GM23248 (cell line): ENCODE measurements at regions of chr10 and their contacts with region 1.

Region 1: DNA sequence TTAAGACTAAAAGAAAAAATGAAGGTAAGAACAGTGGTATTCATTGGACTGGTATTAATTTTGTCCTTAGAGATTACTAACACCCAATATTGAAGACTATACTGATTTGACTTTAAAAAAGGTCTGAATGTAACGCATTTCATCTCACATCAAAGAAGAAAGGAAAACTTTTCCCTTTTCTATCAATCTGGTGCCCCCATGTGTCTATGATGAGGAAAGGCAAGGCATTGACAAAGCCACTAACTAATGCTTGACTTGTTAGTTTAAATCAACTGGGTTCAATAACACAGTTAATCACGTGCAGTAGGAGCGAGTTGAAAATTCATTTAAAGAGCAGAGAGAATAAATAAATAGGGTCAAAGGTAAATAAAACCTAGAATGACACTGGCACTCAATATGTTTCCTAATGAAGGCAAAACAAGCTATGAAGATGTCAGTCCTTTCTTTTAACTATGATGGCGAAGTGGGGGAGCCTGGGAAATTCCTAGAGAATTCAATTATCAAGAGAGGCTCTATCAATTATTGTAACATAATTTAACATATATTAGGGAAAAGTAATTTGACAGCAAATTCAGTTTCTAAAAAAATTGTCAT is 180.9 kb downstream of the ANK3 start:
- DNase-seq: peak; percentile 71
- H3K4me3 ChIP-seq: no peak overlapping the region
- H3K27ac ChIP-seq: no peak overlapping the region
- H3K4me1 ChIP-seq: no peaks in the 10 kb centered on the region; the same call in 1 of the 2 replicates
- H3K27me3 ChIP-seq: no peaks in the 10 kb centered on the region

Region 2: DNA sequence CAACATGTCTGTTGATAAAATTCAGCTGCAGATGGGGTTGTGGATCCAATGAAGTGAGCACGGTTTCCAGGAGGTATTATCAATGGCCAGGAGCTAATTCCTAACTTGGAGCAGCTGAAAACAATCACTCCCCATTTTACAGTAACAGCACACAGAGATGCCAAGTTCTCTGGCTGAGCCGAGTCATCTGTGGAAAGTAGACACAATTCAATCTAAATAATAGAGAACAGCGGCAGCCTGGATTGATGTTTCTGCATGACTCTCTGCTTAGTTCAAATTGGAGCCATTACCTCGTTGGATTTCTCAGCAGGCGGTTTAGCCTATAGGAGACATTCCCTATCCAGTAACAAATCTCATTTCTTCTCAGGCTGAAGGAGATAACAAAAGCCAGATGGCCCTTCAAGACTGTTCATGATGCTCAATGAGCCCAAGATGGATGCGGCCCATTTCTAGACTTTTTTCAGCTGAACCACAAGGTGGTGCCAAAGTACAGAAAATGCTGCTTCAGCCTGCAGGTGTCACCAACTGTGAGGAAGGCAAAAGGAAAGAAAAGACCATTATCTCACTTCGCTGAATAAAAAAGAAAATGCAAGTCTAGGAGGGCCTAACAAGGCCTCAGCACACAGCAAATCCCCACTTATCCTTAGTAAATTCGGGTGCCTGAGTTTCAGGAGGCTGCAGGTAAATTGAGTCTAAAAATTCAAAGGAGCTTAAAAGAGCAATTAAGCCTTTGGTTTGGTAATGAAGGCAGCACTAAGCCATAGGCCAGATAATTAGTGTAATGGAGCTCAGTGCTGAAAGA is 582.9 kb before region 1 on chr10:
- in situ Hi-C with region 1: loop called (anchors 10 kb)
- DNase-seq: peak; percentile 80
- H3K4me3 ChIP-seq: no peak overlapping the region
- H3K27ac ChIP-seq: no peak overlapping the region
- H3K4me1 ChIP-seq: no peaks in the 10 kb centered on the region
- H3K27me3 ChIP-seq: no peaks in the 10 kb centered on the region; the same call in 1 of the 2 replicates

Region 3: GRCh38 chr10:60099998-60100747 is 108.6 kb before region 1 on chr10:
- in situ Hi-C with region 1: loop called (anchors 10 kb)
- DNase-seq: peak; percentile 76
- H3K4me3 ChIP-seq: no peak overlapping the region
- H3K27ac ChIP-seq: no peak overlapping the region
- H3K4me1 ChIP-seq: peaks cover 7% of the 10 kb centered on the region
- H3K27me3 ChIP-seq: no peaks in the 10 kb centered on the region

Region 4: GRCh38 chr10:60114765-60115586 is 93.8 kb before region 1 on chr10:
- in situ Hi-C with region 1: loop called (anchors 5 kb)
- DNase-seq: peak; percentile 75
- H3K4me3 ChIP-seq: no peak overlapping the region
- H3K27ac ChIP-seq: no peak overlapping the region
- H3K4me1 ChIP-seq: no peaks in the 10 kb centered on the region
- H3K27me3 ChIP-seq: no peaks in the 10 kb centered on the region

Region 5: DNA sequence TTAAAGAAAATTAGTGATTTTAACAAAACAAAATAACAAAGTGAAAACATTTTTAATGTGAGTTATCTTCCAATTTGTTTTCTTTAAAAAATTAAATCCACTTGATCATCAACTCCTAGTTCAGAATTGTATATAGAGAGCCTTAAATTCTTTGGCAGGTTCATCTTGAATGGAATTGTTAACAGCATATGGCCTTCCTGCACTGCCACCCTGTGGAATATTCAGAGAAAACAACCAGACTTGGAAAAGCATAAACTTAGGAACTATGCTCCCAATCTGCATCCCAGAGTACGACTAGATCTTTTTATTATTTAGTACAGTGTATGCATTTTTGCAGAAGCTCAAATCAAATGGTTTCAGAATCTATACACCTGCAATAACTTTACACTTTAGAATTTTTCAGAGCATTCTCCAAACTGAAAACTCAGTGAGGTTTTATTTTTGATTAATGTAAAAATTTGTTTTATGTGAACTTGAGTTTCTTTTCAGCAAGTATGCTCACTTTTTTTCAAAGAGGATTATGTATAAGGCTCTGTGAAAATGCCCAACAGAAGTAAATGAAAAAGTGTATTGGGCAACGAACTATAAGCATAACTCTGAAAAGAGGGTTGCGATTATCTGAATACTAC is 225.8 kb after region 1 on chr10:
- in situ Hi-C with region 1: loop called (anchors 10 kb)
- DNase-seq: peak; percentile 76
- H3K4me3 ChIP-seq: no peak overlapping the region
- H3K27ac ChIP-seq: peak overlapping the region; percentile 12; the same call in 1 of the 2 replicates
- H3K4me1 ChIP-seq: peaks cover 28% of the 10 kb centered on the region
- H3K27me3 ChIP-seq: no peaks in the 10 kb centered on the region

Region 6: GRCh38 chr10:61992671-61993668 is 1784.2 kb after region 1 on chr10:
- in situ Hi-C with region 1: no loop called
- DNase-seq: peak; percentile 93
- H3K4me3 ChIP-seq: peak overlapping the region; percentile 70
- H3K27ac ChIP-seq: peak overlapping the region; percentile 99
- H3K4me1 ChIP-seq: peaks cover 33% of the 10 kb centered on the region
- H3K27me3 ChIP-seq: no peaks in the 10 kb centered on the region